ENCODE measurements at regions of chr14 and their contacts with region 1.

Region 1: DNA sequence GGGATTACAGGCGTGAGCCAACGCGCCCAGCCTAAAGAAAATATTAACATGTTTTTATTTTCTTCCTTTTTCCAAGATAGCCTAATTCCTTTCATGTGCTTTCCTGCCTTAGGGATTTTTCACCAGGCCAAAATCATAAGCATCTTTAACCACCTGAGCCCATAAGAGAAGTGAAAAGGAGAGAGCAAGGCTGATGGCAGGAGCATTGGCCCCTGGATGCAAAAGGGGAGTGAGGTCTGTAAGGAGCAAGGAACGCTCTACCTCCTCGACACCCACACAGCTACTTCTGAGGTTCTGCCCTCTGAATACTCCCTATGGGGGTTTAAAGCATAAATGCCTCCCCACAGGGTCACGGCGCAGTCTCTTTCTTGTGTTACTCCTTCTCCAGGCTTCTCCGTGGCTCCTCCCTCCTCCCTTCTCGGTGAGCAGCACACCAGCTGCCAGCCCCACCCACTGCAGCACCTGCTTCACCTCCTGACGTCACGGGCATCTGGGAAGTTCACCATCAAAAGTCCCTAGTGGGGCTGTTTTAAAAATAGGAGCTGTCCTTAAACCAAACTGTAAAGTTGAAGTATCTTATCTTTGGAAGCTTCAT is 67.4 kb downstream of the SPTB start:
- DNase-seq: peak; percentile 34
- H3K4me3 Mint-ChIP-seq: no peak overlapping the region
- H3K27ac Mint-ChIP-seq: no peak overlapping the region
- H3K4me1 Mint-ChIP-seq: no peaks in the 10 kb centered on the region
- H3K27me3 Mint-ChIP-seq: peaks cover 41% of the 10 kb centered on the region

Region 2: GRCh38 chr14:64823305-64823861 is 11.1 kb after region 1 on chr14:
- CTCF ChIA-PET with region 1: interaction called, 19 read pairs
- DNase-seq: peak; percentile 81
- H3K4me3 Mint-ChIP-seq: no peak overlapping the region
- H3K27ac Mint-ChIP-seq: no peak overlapping the region
- H3K4me1 Mint-ChIP-seq: peaks cover 4% of the 10 kb centered on the region
- H3K27me3 Mint-ChIP-seq: peaks cover 80% of the 10 kb centered on the region

Measured in activated naive CD4-positive, alpha-beta T cell treated with anti-CD3 and anti-CD28 coated beads, Interleukin-2, amount 10 ng/mL, durations not matched to agents 7 days and 5 days (primary cell).